ENCODE measurements at regions of chr5 and their contacts with region 1.

Region 1: GRCh38 chr5:157994906-157995519 is 136.1 kb upstream of the CLINT1 start:
- DNase-seq: peak; percentile 71 to 83
- ATAC-seq: peak; percentile 98 to 99
- H3K4me3 ChIP-seq: no peak overlapping the region
- H3K27ac ChIP-seq: no peak overlapping the region
- H3K4me1 ChIP-seq: 0 out of 3 replicates have a peak, but pooled peaks cover 3% of the 10 kb centered on the region
- CTCF ChIP-seq: peak; percentile 74
- EP300 ChIP-seq: no peak
- POLR2A ChIP-seq: no peak
- RAD21 ChIP-seq: peak; percentile 74 to 78

Region 2: DNA sequence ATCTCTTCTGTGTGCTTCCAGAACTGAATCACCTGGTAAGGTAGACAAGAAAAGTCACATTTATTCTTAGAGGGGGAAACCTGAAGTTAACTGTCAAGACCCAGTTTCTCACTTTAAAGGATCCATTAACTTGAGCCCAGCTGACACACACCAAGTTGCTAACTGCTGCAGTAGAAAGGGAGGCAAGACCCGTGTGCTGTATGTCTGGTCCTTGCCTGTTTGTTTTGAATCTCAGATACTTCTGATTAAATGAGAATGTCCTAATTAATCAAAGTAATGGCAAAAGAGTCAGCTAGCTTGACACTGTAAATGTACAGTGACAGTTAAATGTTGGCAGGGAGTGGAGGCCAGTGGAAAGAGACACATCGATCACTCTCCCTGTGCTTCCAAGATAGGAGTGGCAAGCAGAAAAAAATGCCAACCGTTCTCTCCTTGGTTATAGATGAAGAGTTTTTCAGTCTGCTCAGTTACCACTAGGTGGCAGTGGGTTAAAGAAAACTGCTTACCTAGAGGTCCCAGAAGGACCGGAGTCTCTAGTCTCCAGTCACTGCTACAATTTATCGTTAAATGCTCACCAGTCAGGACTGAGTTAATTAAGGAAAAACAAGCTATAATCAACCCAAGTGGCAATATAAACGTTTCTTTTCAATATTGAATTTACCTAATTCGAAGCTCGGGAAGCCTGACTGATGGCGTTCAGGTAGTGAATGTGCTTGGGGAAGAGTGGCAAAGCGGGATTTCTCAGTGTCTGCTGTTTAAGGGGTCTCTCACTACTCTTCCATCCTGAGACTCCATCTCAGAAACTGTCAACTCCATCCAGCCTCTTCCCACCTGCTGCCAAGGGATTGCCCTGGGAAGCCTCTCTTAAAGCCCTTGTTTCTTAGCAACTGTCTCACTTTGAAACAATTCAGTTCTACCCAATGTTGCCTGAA is 233.1 kb before region 1 on chr5:
- CTCF ChIA-PET with region 1: interaction called, 58 read pairs
- POLR2A ChIA-PET with region 1: no interaction called
- DNase-seq: peak; percentile 67 to 72
- ATAC-seq: peak; percentile 94 to 98
- H3K4me3 ChIP-seq: no peak overlapping the region
- H3K27ac ChIP-seq: no peak overlapping the region
- H3K4me1 ChIP-seq: no peaks in the 10 kb centered on the region
- CTCF ChIP-seq: peak; percentile 88
- EP300 ChIP-seq: no peak
- POLR2A ChIP-seq: no peak
- RAD21 ChIP-seq: peak; percentile 77 to 82

Region 3: GRCh38 chr5:157772127-157772526 is 222.9 kb before region 1 on chr5:
- CTCF ChIA-PET with region 1: interaction called, 10 read pairs
- POLR2A ChIA-PET with region 1: no interaction called
- DNase-seq: no peak
- ATAC-seq: no peak
- H3K4me3 ChIP-seq: no peak overlapping the region
- H3K27ac ChIP-seq: no peak overlapping the region
- H3K4me1 ChIP-seq: 0 out of 3 replicates have a peak, but pooled peaks cover 4% of the 10 kb centered on the region
- CTCF ChIP-seq: no peak
- EP300 ChIP-seq: no peak
- POLR2A ChIP-seq: no peak
- RAD21 ChIP-seq: no peak

Region 4: GRCh38 chr5:157816682-157817386 is 178.2 kb before region 1 on chr5:
- CTCF ChIA-PET with region 1: interaction called, 27 read pairs
- POLR2A ChIA-PET with region 1: no interaction called
- DNase-seq: peak in 1 of 2 experiments; percentile 18
- ATAC-seq: no peak
- H3K4me3 ChIP-seq: no peak overlapping the region
- H3K27ac ChIP-seq: no peak overlapping the region
- H3K4me1 ChIP-seq: peaks cover 18% of the 10 kb centered on the region
- CTCF ChIP-seq: peak; percentile 71
- EP300 ChIP-seq: no peak
- POLR2A ChIP-seq: no peak
- RAD21 ChIP-seq: peak; percentile 63 to 82

Region 5: GRCh38 chr5:157956271-157956885 is 38.6 kb before region 1 on chr5:
- CTCF ChIA-PET with region 1: interaction called, 11 read pairs
- POLR2A ChIA-PET with region 1: no interaction called
- DNase-seq: no peak
- ATAC-seq: no peak
- H3K4me3 ChIP-seq: no peak overlapping the region
- H3K27ac ChIP-seq: no peak overlapping the region
- H3K4me1 ChIP-seq: no peaks in the 10 kb centered on the region
- CTCF ChIP-seq: no peak
- EP300 ChIP-seq: no peak
- POLR2A ChIP-seq: no peak
- RAD21 ChIP-seq: no peak

Region 6: GRCh38 chr5:158007336-158007735 is 12.3 kb after region 1 on chr5:
- CTCF ChIA-PET with region 1: interaction called, 11 read pairs
- POLR2A ChIA-PET with region 1: no interaction called
- DNase-seq: no peak
- ATAC-seq: no peak; a peak in 1 of 6 replicates
- H3K4me3 ChIP-seq: no peak overlapping the region
- H3K27ac ChIP-seq: no peak overlapping the region
- H3K4me1 ChIP-seq: no peaks in the 10 kb centered on the region
- CTCF ChIP-seq: no peak
- EP300 ChIP-seq: no peak
- POLR2A ChIP-seq: no peak
- RAD21 ChIP-seq: no peak

Measured in A549 (cell line).